ENCODE measurements at regions of chr20 and their contacts with region 1.

Region 1: DNA sequence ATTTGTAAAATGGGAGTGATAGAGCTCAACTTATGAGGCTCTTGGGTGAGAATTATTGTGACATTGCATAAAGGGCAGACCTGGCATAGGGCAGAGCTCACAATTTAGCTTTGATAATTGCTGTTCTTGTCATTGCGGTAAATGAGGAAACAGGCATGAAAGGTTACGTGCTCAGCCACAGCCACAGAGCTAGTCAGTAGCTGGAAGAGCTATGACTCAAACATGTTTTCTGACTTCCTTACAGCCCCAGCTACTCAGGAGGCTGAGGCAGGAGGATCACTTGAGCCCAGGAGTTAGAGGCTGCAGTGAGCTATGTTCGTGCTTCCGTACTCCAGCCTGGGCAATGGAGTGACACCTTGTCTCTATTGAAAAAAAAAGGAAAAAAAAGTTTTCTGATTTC is 3.5 kb upstream of the GHRH start:
- DNase-seq: peak; percentile 54
- ATAC-seq: peak; percentile 75
- H3K4me3 ChIP-seq: no peak overlapping the region
- H3K4me3 Mint-ChIP-seq: no peak overlapping the region
- H3K27ac ChIP-seq: no peak overlapping the region
- H3K27ac Mint-ChIP-seq: no peak overlapping the region
- H3K4me1 ChIP-seq: peaks cover 10 to 17% of the 10 kb centered on the region in 2 donors
- H3K4me1 Mint-ChIP-seq: peaks cover 13% of the 10 kb centered on the region
- H3K27me3 ChIP-seq: no peaks in the 10 kb centered on the region
- H3K27me3 Mint-ChIP-seq: peaks cover 12% of the 10 kb centered on the region
- CTCF ChIP-seq: no peak

Region 2: GRCh38 chr20:37276494-37277252 is 11.5 kb after region 1 on chr20:
- CTCF ChIA-PET with region 1: interaction called, 21 read pairs
- POLR2A ChIA-PET with region 1: no interaction called
- intact Hi-C with region 1: no loop called
- DNase-seq: peak; percentile 68
- ATAC-seq: peak; percentile 61
- H3K4me3 ChIP-seq: peak overlapping the region in 1 of 5 experiments; percentile 1
- H3K4me3 Mint-ChIP-seq: peak overlapping the region; percentile 73
- H3K27ac ChIP-seq: peak overlapping the region; percentile 60 to 65
- H3K27ac Mint-ChIP-seq: peak overlapping the region; percentile 92
- H3K4me1 ChIP-seq: peaks cover 45 to 48% of the 10 kb centered on the region in 2 donors
- H3K4me1 Mint-ChIP-seq: peaks cover 37% of the 10 kb centered on the region
- H3K27me3 ChIP-seq: no peaks in the 10 kb centered on the region
- H3K27me3 Mint-ChIP-seq: no peaks in the 10 kb centered on the region
- CTCF ChIP-seq: no peak